ENCODE measurements at regions of chr10 and their contacts with region 1.

Region 1: GRCh38 chr10:17029581-17030271 is 99.9 kb downstream of the CUBN start:
- DNase-seq: peak; percentile 62 to 91 (median 72)
- ATAC-seq: peak; percentile 91
- H3K4me3 ChIP-seq: no peak overlapping the region
- H3K27ac ChIP-seq: peak overlapping the region; percentile 26
- H3K4me1 ChIP-seq: peaks cover 4 to 23% of the 10 kb centered on the region in 2 experiments; a peak in 4 of 5 replicates
- H3K27me3 ChIP-seq: no peaks in the 10 kb centered on the region
- CTCF ChIP-seq: no peak
- EP300 ChIP-seq: peak; percentile 97
- POLR2A ChIP-seq: 0 out of 2 replicates have a peak, but pooled peaks have one; percentile 32
- RAD21 ChIP-seq: peak in 1 of 2 experiments; percentile 29; a peak in 1 of 4 replicates

Region 2: DNA sequence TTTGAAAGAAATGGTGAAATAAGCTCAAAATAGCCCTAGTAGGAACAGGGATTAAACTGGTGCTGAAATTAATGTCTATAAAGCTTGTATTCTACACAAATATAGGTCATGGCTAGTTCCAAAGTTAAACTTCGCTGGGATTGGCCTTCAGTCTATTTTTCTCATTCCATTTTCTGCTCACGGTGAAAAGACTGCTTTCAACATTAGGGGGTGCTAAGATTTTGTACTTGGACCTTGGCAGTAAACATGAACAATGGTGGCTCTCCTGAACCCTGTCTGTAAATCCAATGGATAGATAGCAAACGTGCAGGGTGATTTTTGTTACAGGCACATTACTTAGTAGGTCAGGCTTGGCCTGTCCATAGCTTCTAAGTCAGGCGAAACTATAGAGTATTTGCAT is 176.5 kb before region 1 on chr10:
- CTCF ChIA-PET with region 1: no interaction called
- POLR2A ChIA-PET with region 1: no interaction called
- in situ Hi-C with region 1: no loop called
- intact Hi-C with region 1: no loop called
- DNase-seq: peak in 2 of 4 experiments; percentile 17 to 45
- ATAC-seq: peak; percentile 71
- H3K4me3 ChIP-seq: no peak overlapping the region
- H3K27ac ChIP-seq: no peak overlapping the region
- H3K4me1 ChIP-seq: no peaks in the 10 kb centered on the region
- H3K27me3 ChIP-seq: peaks cover 0 to 2% of the 10 kb centered on the region in 2 experiments; a peak in 2 of 5 replicates
- CTCF ChIP-seq: peak; percentile 29 to 71 (median 44); a peak in 4 of 6 replicates
- EP300 ChIP-seq: no peak
- POLR2A ChIP-seq: no peak
- RAD21 ChIP-seq: peak; percentile 74 to 79

Region 3: GRCh38 chr10:16975188-16975587 is 54.5 kb before region 1 on chr10:
- CTCF ChIA-PET with region 1: no interaction called
- POLR2A ChIA-PET with region 1: no interaction called
- in situ Hi-C with region 1: no loop called
- intact Hi-C with region 1: no loop called
- DNase-seq: no peak
- ATAC-seq: no peak
- H3K4me3 ChIP-seq: no peak overlapping the region
- H3K27ac ChIP-seq: no peak overlapping the region
- H3K4me1 ChIP-seq: no peaks in the 10 kb centered on the region
- H3K27me3 ChIP-seq: no peaks in the 10 kb centered on the region
- CTCF ChIP-seq: no peak
- EP300 ChIP-seq: no peak
- POLR2A ChIP-seq: no peak
- RAD21 ChIP-seq: no peak

Region 4: DNA sequence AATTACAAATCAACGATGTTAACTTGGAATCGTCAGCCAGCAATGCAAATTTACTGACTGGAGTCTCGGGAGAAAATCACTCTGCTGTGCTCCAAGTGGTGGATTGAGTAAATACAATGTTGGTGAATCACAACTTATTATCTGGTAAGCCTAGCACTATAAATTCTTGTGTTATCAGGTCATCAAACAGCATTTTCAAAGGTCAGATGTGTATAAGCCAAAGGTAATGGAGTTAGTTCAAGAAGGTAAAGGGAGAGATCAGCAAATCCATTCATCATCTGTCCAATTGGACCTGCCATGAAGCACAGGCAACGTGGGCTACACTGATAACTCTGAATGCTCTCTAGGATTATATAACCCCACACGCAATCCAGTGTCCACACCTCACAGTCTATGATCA is 86.0 kb after region 1 on chr10:
- CTCF ChIA-PET with region 1: no interaction called
- POLR2A ChIA-PET with region 1: no interaction called
- in situ Hi-C with region 1: no loop called
- intact Hi-C with region 1: loop called (anchors 5 kb)
- DNase-seq: peak in 1 of 4 experiments; percentile 43
- ATAC-seq: peak; percentile 53; the same call in 1 of the 3 replicates
- H3K4me3 ChIP-seq: no peak overlapping the region
- H3K27ac ChIP-seq: no peak overlapping the region
- H3K4me1 ChIP-seq: no peaks in the 10 kb centered on the region; a peak in 1 of 5 replicates
- H3K27me3 ChIP-seq: peaks cover 0 to 5% of the 10 kb centered on the region in 2 experiments; a peak in 2 of 5 replicates
- CTCF ChIP-seq: peak in 1 of 3 experiments; percentile 19; a peak in 1 of 6 replicates
- EP300 ChIP-seq: no peak
- POLR2A ChIP-seq: no peak
- RAD21 ChIP-seq: peak in 1 of 2 experiments; percentile 16; a peak in 1 of 4 replicates

Measured in K562 (cell line).